ENCODE measurements at regions of chr11 and their contacts with region 1.

Region 1: GRCh38 chr11:81005595-81005994 is 1564.8 kb upstream of the TENM4 start:
- DNase-seq: peak; percentile 88
- H3K4me3 Mint-ChIP-seq: no peak overlapping the region
- H3K27ac Mint-ChIP-seq: peak overlapping the region; percentile 16
- H3K4me1 Mint-ChIP-seq: peaks cover 15% of the 10 kb centered on the region
- H3K27me3 Mint-ChIP-seq: no peaks in the 10 kb centered on the region
- CTCF ChIP-seq: no peak

Region 2: GRCh38 chr11:80163011-80163410 is 842.6 kb before region 1 on chr11:
- CTCF ChIA-PET with region 1: interaction called, 5 read pairs
- POLR2A ChIA-PET with region 1: no interaction called
- intact Hi-C with region 1: loop called (anchors 5 kb)
- DNase-seq: peak; percentile 68
- H3K4me3 Mint-ChIP-seq: no peak overlapping the region
- H3K27ac Mint-ChIP-seq: peak overlapping the region; percentile 47
- H3K4me1 Mint-ChIP-seq: peaks cover 34% of the 10 kb centered on the region
- H3K27me3 Mint-ChIP-seq: no peaks in the 10 kb centered on the region
- CTCF ChIP-seq: no peak

Region 3: DNA sequence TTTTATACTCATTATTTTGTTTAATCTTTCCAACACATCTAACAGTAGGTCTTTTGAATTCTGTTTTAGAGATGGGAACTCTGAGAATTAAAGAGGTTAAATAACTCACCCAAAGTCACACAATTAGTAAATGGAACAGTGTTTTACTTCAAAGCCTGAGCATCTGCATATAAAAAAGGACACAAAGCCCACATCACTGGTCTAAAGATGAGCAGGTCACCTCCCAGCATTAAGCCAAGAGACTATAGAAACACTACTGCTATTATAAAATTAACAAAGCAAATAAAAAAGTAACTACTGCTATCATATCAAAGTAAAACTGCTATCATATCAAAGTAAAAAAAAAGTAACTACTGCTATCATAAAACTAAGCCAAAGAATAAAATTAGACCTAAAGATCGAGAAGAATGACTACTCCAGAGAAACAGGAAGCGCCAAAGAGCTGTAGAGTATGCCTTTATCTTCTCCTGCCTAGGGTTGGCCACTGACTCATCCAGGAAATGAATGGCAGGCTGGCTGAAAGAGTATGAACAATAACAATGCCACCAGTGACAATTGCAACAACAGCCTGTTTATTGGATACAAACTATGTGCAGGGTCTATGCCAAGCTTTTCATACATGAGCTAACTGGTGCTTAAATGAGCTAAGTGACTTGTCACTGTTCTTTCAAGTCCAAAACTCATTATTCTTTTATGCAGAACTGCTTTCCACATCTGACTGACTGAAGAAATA is 411.8 kb before region 1 on chr11:
- CTCF ChIA-PET with region 1: no interaction called
- POLR2A ChIA-PET with region 1: interaction called, 4 read pairs
- intact Hi-C with region 1: loop called (anchors 2 kb)
- DNase-seq: peak; percentile 85
- H3K4me3 Mint-ChIP-seq: peak overlapping the region; percentile 16
- H3K27ac Mint-ChIP-seq: peak overlapping the region; percentile 87
- H3K4me1 Mint-ChIP-seq: peaks cover 16% of the 10 kb centered on the region
- H3K27me3 Mint-ChIP-seq: no peaks in the 10 kb centered on the region
- CTCF ChIP-seq: no peak

Region 4: DNA sequence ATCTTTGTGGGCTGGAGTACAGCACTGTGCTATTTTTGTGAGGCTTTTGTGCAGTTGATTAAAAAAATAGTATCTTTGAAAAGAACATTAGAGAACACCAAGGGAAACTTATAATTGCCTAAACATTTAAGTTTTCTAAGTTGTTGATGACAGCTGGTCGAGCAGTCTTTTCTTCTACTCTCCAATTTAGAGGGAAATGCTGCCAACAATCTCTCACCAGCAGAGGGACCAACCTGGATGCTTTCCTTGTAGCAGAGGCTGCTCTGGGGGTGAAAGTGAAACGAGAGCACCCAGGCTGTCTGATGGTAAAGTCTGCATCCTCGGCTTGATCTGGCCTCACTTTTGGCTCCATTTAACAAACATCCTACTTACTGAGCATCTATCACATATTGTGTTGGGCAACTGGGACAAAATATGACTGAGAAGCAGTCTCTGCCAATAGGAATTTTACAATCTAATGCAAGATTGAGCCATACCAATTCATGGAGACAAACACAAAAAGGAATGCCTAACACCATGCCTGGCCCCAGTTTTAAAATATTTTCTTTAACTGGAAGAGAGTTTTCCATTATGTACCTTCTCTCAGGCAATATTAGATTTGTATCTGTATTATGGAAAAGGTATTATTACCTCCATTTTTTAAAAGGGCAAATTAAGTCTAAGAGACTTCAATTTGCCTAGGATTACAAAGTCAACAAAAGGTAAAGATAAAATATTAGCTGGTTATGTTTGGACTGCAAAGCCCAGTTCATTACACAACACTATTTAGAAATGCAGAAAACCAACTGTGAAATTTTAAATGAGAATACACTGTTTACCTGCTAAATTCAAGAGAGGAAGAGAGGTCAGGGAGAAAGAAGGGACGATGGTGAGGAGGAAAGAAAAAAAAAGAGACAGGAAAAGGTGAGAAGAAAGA is 278.0 kb before region 1 on chr11:
- CTCF ChIA-PET with region 1: no interaction called
- POLR2A ChIA-PET with region 1: no interaction called
- intact Hi-C with region 1: loop called (anchors 10 kb)
- DNase-seq: peak; percentile 52
- H3K4me3 Mint-ChIP-seq: no peak overlapping the region
- H3K27ac Mint-ChIP-seq: no peak overlapping the region
- H3K4me1 Mint-ChIP-seq: peaks cover 4% of the 10 kb centered on the region
- H3K27me3 Mint-ChIP-seq: no peaks in the 10 kb centered on the region
- CTCF ChIP-seq: no peak

Region 5: DNA sequence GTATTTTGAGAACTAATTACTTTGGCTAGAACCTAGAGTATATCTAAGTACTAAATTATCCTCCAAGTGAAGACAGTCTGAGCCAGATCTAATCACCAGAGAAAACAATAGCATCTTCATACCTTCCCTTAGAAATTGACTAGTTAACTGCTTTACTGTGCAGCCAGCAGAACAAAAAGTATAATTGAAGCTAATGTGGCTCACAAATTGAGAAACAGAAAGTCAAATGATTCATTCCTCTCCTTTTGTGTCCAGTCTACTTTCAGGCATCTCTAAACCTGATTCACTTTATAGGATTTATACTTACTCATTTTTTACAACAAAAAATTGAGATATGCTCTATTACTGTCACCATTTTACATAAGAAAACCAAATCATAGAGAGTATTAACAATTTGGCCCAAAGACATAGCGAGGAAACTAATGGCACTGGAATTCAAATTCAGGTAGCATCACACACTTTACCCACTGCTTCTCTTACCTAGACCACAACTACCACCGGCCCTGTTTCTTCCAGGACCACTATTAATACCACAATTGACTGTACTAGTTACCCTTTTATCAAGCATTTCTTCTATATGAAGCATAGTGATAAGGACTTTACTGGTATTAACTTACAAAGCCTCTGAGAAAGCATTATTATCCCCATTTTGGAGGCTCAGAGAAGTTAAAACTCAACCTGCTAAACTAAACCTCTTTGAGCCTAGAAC is 162.2 kb before region 1 on chr11:
- CTCF ChIA-PET with region 1: no interaction called
- POLR2A ChIA-PET with region 1: no interaction called
- intact Hi-C with region 1: no loop called
- DNase-seq: no peak
- H3K4me3 Mint-ChIP-seq: no peak overlapping the region
- H3K27ac Mint-ChIP-seq: no peak overlapping the region
- H3K4me1 Mint-ChIP-seq: peaks cover 13% of the 10 kb centered on the region
- H3K27me3 Mint-ChIP-seq: no peaks in the 10 kb centered on the region
- CTCF ChIP-seq: no peak

Region 6: GRCh38 chr11:80855975-80856524 is 149.5 kb before region 1 on chr11:
- CTCF ChIA-PET with region 1: no interaction called
- POLR2A ChIA-PET with region 1: no interaction called
- intact Hi-C with region 1: loop called (anchors 10 kb)
- DNase-seq: peak; percentile 78
- H3K4me3 Mint-ChIP-seq: no peak overlapping the region
- H3K27ac Mint-ChIP-seq: no peak overlapping the region
- H3K4me1 Mint-ChIP-seq: peaks cover 29% of the 10 kb centered on the region
- H3K27me3 Mint-ChIP-seq: no peaks in the 10 kb centered on the region
- CTCF ChIP-seq: no peak

Region 7: GRCh38 chr11:81222491-81222890 is 216.9 kb after region 1 on chr11:
- CTCF ChIA-PET with region 1: no interaction called
- POLR2A ChIA-PET with region 1: no interaction called
- intact Hi-C with region 1: no loop called
- DNase-seq: no peak
- H3K4me3 Mint-ChIP-seq: no peak overlapping the region
- H3K27ac Mint-ChIP-seq: no peak overlapping the region
- H3K4me1 Mint-ChIP-seq: peaks cover 6% of the 10 kb centered on the region
- H3K27me3 Mint-ChIP-seq: no peaks in the 10 kb centered on the region
- CTCF ChIP-seq: no peak

Region 8: GRCh38 chr11:81237139-81237538 is 231.5 kb after region 1 on chr11:
- CTCF ChIA-PET with region 1: interaction called, 4 read pairs
- POLR2A ChIA-PET with region 1: no interaction called
- intact Hi-C with region 1: loop called (anchors 2 kb)
- DNase-seq: peak; percentile 65
- H3K4me3 Mint-ChIP-seq: no peak overlapping the region
- H3K27ac Mint-ChIP-seq: no peak overlapping the region
- H3K4me1 Mint-ChIP-seq: no peaks in the 10 kb centered on the region
- H3K27me3 Mint-ChIP-seq: peaks cover 14% of the 10 kb centered on the region
- CTCF ChIP-seq: peak; percentile 59

Measured in MCF 10A (cell line).